ENCODE measurements at regions of chr19 and their contacts with region 1.

Region 1: DNA sequence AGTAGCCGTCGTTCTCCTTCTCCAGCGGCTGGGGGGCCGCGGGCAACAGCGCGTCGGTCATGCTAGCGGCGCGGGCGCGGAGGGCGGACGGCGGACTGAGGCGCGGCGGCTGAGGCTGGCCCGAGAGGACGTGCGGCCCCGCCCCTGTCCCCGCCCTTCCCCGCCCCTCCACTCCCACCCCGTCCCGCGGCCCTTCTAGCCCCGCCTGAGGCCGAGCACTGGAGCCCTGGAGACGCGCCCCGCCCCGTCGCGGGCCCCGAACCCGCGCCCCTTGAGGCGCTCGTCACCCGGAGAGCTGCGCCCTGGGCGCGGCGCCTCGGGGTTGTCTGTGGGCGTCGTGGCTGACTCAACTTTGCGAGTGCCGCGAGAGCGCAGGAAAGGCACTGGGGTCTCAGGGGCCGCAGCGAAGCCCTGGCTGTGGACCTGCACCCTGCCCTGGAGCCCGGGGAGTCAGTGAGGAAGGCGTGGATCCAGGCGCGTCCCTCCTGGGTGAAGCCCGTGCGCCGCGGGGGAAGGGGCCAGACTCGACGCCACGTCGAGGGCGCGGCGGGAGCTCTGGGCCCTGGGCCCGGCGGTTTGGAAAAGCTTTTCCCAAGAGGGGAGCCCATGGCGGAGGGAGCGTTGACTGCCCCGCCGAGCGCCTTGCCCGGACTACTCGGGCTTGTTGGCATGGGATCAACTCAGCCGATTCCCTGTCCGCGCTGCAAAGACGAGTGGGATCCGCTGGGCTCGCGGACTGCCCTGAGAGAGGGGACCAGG is at the start of gene RHPN2:
- DNase-seq: peak; percentile 82
- ATAC-seq: peak; percentile 95
- H3K4me3 Mint-ChIP-seq: peak within 1 kb of the TSS; percentile 67
- H3K27ac Mint-ChIP-seq: no peak within 1 kb of the TSS
- H3K4me1 Mint-ChIP-seq: peaks cover 3% of the 10 kb centered on the region
- H3K27me3 Mint-ChIP-seq: peaks cover 28% of the 10 kb centered on the region
- total RNA-seq, gene RHPN2: 5.1 to 5.7 TPM

Region 2: DNA sequence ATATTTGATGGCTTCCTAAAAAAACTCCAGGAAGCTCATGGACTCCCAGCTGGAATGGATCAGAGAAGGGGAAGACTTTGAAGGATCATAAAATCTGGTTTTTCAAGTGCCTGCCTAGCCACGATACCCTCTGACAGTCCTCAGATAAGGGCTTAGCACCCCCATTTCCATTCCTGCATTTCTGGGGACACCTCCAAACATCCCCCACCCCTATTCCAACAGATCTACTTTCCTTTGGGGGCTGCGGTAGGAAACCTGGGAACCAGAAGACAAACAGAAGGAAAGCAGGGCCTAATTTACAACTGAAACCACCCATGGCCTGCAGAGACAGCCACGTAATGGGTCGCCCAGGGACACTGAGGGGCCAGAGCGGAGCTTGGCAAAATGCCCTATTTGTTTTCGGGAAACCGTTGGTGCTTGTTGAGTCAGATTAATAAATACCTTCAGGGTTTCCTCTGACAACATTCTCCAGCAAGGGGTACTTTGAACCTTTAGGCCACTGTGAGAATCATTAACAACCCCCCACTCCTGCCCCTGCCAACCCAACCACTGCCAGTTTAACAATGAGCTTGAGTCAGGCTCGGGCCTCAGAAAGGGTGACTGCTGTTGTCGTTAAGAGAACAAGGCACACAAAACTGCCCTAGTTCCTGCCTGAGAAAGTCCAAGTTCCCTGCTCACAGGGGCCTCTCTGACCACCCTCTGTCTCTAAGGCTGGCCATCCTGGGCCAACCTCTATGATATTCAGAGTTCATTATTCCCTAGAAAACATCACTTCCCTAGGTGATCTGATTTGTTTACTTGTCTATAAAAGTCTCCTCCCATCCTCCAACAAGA is 23.8 kb before region 1 on chr19:
- CTCF ChIA-PET with region 1: no interaction called
- POLR2A ChIA-PET with region 1: no interaction called
- intact Hi-C with region 1: loop called in 1 of 2 experiments (anchors 1 kb)
- DNase-seq: no peak
- ATAC-seq: no peak
- H3K4me3 Mint-ChIP-seq: no peak overlapping the region
- H3K27ac Mint-ChIP-seq: no peak overlapping the region
- H3K4me1 Mint-ChIP-seq: peaks cover 9% of the 10 kb centered on the region
- H3K27me3 Mint-ChIP-seq: no peaks in the 10 kb centered on the region

Region 3: DNA sequence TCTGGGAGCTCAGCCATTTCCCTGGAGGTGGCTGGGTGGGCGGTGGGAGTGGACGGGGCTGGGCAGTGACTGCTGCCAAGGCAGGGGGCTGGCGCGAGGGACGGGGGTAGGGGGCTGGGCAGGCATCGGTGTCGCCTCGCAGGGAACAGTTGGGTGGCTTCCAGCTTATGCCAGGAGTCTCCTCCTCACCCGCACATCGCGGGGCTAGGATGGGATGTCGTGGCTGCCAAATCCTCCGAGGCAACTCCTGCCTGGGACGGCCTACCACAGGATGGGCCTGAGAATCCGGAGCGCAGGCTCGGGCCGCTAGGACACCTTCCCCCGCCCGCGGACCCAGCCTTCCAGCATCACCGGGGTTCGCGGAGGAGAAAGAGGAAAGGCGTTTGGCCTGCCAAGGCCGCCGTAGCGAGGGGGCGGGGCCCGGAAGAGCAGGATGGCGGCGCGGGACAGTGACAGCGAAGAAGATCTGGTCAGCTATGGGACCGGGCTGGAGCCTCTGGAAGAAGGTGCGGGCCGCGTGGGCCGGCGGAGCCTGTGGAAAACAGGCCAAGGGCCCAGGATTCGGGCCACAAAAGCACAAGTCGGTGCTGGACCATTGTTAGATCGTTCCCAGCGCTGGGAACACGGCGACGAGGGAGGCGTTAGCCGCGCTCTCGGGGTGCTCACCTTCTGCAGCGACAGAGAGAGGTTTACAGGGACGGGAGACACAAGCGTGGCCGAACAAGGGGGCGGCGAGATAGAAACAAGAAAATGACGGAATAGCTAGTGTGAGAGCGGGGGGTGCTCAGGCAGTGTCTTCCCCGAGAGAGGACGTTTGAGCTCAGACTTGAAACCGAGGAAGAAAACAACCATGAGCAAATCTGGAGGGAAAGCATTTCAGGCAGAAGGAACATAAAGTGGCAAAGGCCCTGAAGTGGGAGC is 16.1 kb after region 1 on chr19 and contains the start of gene GPATCH1:
- CTCF ChIA-PET with region 1: interaction called, 3 read pairs
- POLR2A ChIA-PET with region 1: no interaction called
- intact Hi-C with region 1: loop called in 1 of 2 experiments (anchors 1 kb)
- DNase-seq: peak; percentile 93
- ATAC-seq: peak; percentile 94
- H3K4me3 Mint-ChIP-seq: peak within 1 kb of the TSS; percentile 99
- H3K27ac Mint-ChIP-seq: peak within 1 kb of the TSS; percentile 97
- H3K4me1 Mint-ChIP-seq: peaks cover 16% of the 10 kb centered on the region
- H3K27me3 Mint-ChIP-seq: no peaks in the 10 kb centered on the region
- total RNA-seq, gene GPATCH1: 9.5 to 11.1 TPM